Activated T-helper 2 cell treated with anti-CD3 and anti-CD28 coated beads, Interferon-gamma antibody, Interleukin-2, Interleukin-4, amounts not matched to agents 10 μg/mL and 5 μg/mL and 100 μg/mL, durations not matched to agents 14 hours and 24 hours and 36 hours (primary cell): ENCODE measurements at regions of chr2 and their contacts with region 1.

Region 1: DNA sequence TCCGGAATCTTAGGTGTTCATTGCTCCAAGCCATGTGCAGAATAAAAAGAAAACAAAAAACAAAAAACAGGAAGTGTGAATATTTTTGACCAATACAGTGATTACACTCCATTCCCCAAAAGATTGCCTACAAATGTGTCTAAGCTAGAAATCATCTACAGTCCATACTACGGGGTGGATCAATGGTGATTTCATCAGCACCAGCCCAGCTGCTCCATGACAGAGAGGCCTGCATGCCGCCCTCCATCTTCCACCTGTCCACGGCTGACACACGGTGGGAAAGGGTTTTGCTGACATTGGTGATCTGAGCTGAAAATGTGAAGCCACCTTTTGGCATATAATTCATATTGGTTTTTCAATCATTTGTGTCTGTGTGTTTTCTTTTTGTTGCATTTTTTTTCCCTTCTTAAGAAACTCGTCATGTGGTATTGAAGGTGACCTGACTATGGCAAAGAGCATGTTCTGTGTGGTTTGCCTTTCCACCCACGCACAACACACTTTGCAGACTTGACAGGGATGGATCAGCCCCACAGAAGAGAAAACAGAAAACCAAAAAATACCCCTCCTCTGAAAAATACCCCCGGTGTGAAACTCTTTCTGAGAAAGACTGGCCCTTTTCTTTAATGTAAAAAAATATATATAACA is 533.1 kb downstream of the RNF144A start:
- DNase-seq: peak; percentile 59
- H3K4me3 Mint-ChIP-seq: peak overlapping the region; percentile 26
- H3K27ac Mint-ChIP-seq: peak overlapping the region; percentile 99
- H3K4me1 Mint-ChIP-seq: peaks cover 85% of the 10 kb centered on the region
- H3K27me3 Mint-ChIP-seq: no peaks in the 10 kb centered on the region

Region 2: DNA sequence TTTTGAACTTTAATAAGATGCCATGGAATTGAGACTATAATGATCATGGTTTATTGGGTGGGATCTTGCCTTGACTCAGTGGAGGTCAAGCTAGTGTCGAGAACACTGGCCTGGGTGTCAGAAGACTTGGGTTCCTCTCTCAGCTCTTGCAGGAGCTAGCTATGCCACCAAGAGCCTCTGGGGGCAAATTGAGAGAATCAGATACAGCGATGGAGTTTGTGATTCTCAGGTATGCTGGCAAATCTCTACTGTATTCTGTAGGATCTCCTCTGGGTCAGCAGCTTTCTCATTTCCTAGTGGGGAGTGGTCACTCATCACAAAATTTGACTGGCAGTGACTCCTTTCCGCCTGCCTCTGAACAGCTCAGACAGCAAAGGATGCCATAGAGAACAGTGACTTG is 56.1 kb before region 1 on chr2:
- intact Hi-C with region 1: no loop called
- DNase-seq: no peak
- H3K4me3 Mint-ChIP-seq: no peak overlapping the region
- H3K27ac Mint-ChIP-seq: no peak overlapping the region
- H3K4me1 Mint-ChIP-seq: no peaks in the 10 kb centered on the region
- H3K27me3 Mint-ChIP-seq: peaks cover 11% of the 10 kb centered on the region

Region 3: GRCh38 chr2:7517088-7517487 is 66.8 kb after region 1 on chr2:
- intact Hi-C with region 1: loop called (anchors 1 kb)
- DNase-seq: no peak
- H3K4me3 Mint-ChIP-seq: peak overlapping the region; percentile 1
- H3K27ac Mint-ChIP-seq: peak overlapping the region; percentile 92
- H3K4me1 Mint-ChIP-seq: peaks cover 57% of the 10 kb centered on the region
- H3K27me3 Mint-ChIP-seq: no peaks in the 10 kb centered on the region

Region 4: GRCh38 chr2:7539760-7540159 is 89.5 kb after region 1 on chr2:
- intact Hi-C with region 1: no loop called
- DNase-seq: no peak
- H3K4me3 Mint-ChIP-seq: peak overlapping the region; percentile 54
- H3K27ac Mint-ChIP-seq: peak overlapping the region; percentile 70
- H3K4me1 Mint-ChIP-seq: peaks cover 46% of the 10 kb centered on the region
- H3K27me3 Mint-ChIP-seq: no peaks in the 10 kb centered on the region

Region 5: GRCh38 chr2:7567646-7568045 is 117.3 kb after region 1 on chr2:
- intact Hi-C with region 1: loop called (anchors 1 kb)
- DNase-seq: peak; percentile 53
- H3K4me3 Mint-ChIP-seq: peak overlapping the region; percentile 37
- H3K27ac Mint-ChIP-seq: peak overlapping the region; percentile 82
- H3K4me1 Mint-ChIP-seq: peaks cover 63% of the 10 kb centered on the region
- H3K27me3 Mint-ChIP-seq: no peaks in the 10 kb centered on the region

Region 6: GRCh38 chr2:7672027-7672684 is 221.8 kb after region 1 on chr2:
- intact Hi-C with region 1: loop called (anchors 1 kb)
- DNase-seq: peak; percentile 51
- H3K4me3 Mint-ChIP-seq: peak overlapping the region; percentile 63
- H3K27ac Mint-ChIP-seq: peak overlapping the region; percentile 97
- H3K4me1 Mint-ChIP-seq: peaks cover 60% of the 10 kb centered on the region
- H3K27me3 Mint-ChIP-seq: no peaks in the 10 kb centered on the region

Region 7: DNA sequence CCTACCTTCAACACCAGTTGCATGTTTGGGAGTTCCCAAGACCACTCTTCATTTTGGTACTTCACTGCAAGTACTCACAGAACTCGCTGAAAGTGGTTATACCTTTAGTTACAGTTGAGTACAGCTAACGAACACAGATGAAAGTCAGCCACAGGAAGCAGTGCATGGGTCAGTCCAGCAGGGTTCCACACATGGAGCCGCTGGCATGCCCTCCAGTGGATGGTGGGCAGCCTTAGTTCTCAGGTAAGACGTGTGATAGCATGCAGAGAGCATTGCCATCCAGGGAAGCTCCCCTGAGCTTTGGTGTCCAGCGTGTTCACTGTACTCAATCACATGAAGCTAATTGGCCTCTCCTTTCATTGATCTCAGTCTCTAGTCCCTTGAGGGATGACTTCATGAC is 282.2 kb after region 1 on chr2:
- intact Hi-C with region 1: no loop called
- DNase-seq: no peak
- H3K4me3 Mint-ChIP-seq: peak overlapping the region; percentile 46
- H3K27ac Mint-ChIP-seq: peak overlapping the region; percentile 64
- H3K4me1 Mint-ChIP-seq: peaks cover 55% of the 10 kb centered on the region
- H3K27me3 Mint-ChIP-seq: no peaks in the 10 kb centered on the region